ENCODE measurements at regions of chr5 and their contacts with region 1.

Region 1: DNA sequence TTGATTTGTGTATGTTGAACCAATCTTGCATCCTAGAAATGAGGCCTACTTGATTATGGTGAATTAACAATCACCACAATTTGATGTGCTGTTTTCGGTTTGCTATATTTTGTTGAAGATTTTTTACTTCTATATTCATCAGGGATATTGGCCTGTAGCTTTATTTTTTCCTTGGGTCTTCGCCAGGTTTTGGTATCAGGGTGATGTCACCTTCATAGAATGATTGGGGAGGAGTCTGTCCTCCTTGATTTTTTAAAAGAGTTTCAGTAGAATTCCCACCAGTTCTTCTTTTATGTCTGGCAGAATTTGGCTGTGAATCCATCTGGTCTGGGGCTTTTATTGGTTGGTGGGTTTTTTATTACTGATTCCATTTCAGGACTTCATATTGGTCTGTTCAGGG is 115.2 kb downstream of the CPLANE1 start:
- DNase-seq: no peak
- ATAC-seq: no peak
- H3K4me3 ChIP-seq: no peak overlapping the region
- H3K27ac ChIP-seq: no peak overlapping the region
- H3K4me1 ChIP-seq: no peaks in the 10 kb centered on the region
- H3K27me3 ChIP-seq: no peaks in the 10 kb centered on the region
- CTCF ChIP-seq: no peak

Region 2: GRCh38 chr5:37071901-37072581 is 61.9 kb before region 1 on chr5:
- CTCF ChIA-PET with region 1: interaction called, 14 read pairs
- POLR2A ChIA-PET with region 1: no interaction called
- in situ Hi-C with region 1: no loop called
- intact Hi-C with region 1: no loop called
- DNase-seq: no peak
- ATAC-seq: peak; percentile 64
- H3K4me3 ChIP-seq: no peak overlapping the region
- H3K27ac ChIP-seq: no peak overlapping the region
- H3K4me1 ChIP-seq: no peaks in the 10 kb centered on the region
- H3K27me3 ChIP-seq: no peaks in the 10 kb centered on the region
- CTCF ChIP-seq: no peak

Region 3: GRCh38 chr5:37197340-37198050 is 63.6 kb after region 1 on chr5:
- CTCF ChIA-PET with region 1: no interaction called
- POLR2A ChIA-PET with region 1: no interaction called
- in situ Hi-C with region 1: no loop called
- intact Hi-C with region 1: no loop called
- DNase-seq: no peak
- ATAC-seq: no peak
- H3K4me3 ChIP-seq: no peak overlapping the region
- H3K27ac ChIP-seq: no peak overlapping the region
- H3K4me1 ChIP-seq: no peaks in the 10 kb centered on the region
- H3K27me3 ChIP-seq: no peaks in the 10 kb centered on the region
- CTCF ChIP-seq: no peak